Activated T-helper 1 cell treated with anti-CD3 and anti-CD28 coated beads, Interleukin-12 subunit alpha, Interleukin-12 subunit beta, Interleukin-2, Interleukin-4 antibody, amounts not matched to agents 30 ng/mL and 10 ng/mL and 1 ng/mL, durations not matched to agents 14 hours and 24 hours and 36 hours (primary cell): ENCODE measurements at regions of chr22 and their contacts with region 1.

Region 1: GRCh38 chr22:28907311-28908008 is 24.1 kb downstream of the ZNRF3 start:
- DNase-seq: peak; percentile 3
- H3K4me3 Mint-ChIP-seq: peak overlapping the region; percentile 4
- H3K27ac Mint-ChIP-seq: peak overlapping the region; percentile 55
- H3K4me1 Mint-ChIP-seq: peaks cover 24% of the 10 kb centered on the region
- H3K27me3 Mint-ChIP-seq: peaks cover 71% of the 10 kb centered on the region

Region 2: GRCh38 chr22:28741758-28742561 is 165.5 kb before region 1 on chr22 and contains the starts of genes CHEK2 and HSCB:
- intact Hi-C with region 1: loop called (anchors 1 kb)
- DNase-seq: peak; percentile 97
- H3K4me3 Mint-ChIP-seq: peak within 1 kb of the TSS; percentile 86
- H3K27ac Mint-ChIP-seq: peak within 1 kb of the TSS; percentile 70
- H3K4me1 Mint-ChIP-seq: peaks cover 42% of the 10 kb centered on the region
- H3K27me3 Mint-ChIP-seq: no peaks in the 10 kb centered on the region
- total RNA-seq, gene CHEK2: 31.4 and 35.0 TPM in 2 replicates
- total RNA-seq, gene HSCB: 16.6 and 18.0 TPM in 2 replicates

Region 3: GRCh38 chr22:28810821-28811491 is 96.5 kb before region 1 on chr22:
- intact Hi-C with region 1: loop called (anchors 5 kb)
- DNase-seq: peak; percentile 60
- H3K4me3 Mint-ChIP-seq: peak overlapping the region; percentile 76
- H3K27ac Mint-ChIP-seq: peak overlapping the region; percentile 89
- H3K4me1 Mint-ChIP-seq: peaks cover 81% of the 10 kb centered on the region
- H3K27me3 Mint-ChIP-seq: no peaks in the 10 kb centered on the region

Region 4: DNA sequence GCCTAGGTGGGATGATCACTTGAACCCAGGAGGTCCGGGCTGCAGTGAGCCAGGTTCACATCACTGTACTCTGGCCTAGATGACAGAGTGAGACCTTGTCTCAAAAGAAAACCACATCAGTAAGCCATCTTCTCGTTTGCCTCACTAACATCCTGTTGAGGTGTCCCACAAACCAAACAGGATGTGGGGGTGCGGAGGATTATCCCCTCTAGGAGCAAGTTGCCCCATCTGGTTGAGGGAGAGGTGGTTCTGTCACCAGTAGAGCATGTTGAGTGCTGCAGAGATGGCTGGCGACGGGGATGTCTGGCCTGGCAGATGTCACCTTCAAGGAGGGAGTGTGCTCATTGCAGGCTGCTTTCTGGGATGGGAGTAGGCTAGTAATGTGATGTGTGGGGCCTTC is 48.4 kb after region 1 on chr22:
- intact Hi-C with region 1: loop called (anchors 1 kb)
- DNase-seq: peak; percentile 76
- H3K4me3 Mint-ChIP-seq: peak overlapping the region; percentile 61
- H3K27ac Mint-ChIP-seq: peak overlapping the region; percentile 67
- H3K4me1 Mint-ChIP-seq: peaks cover 17% of the 10 kb centered on the region
- H3K27me3 Mint-ChIP-seq: peaks cover 89% of the 10 kb centered on the region

Region 5: GRCh38 chr22:29156524-29156923 is 249.1 kb after region 1 on chr22:
- intact Hi-C with region 1: no loop called
- DNase-seq: no peak
- H3K4me3 Mint-ChIP-seq: no peak overlapping the region
- H3K27ac Mint-ChIP-seq: no peak overlapping the region
- H3K4me1 Mint-ChIP-seq: peaks cover 8% of the 10 kb centered on the region
- H3K27me3 Mint-ChIP-seq: peaks cover 31% of the 10 kb centered on the region

Region 6: GRCh38 chr22:29267858-29268417 is 360.5 kb after region 1 on chr22 and contains the starts of genes EWSR1 and RHBDD3:
- intact Hi-C with region 1: loop called (anchors 2 kb)
- DNase-seq: peak; percentile 97
- H3K4me3 Mint-ChIP-seq: peak within 1 kb of the TSS; percentile 96
- H3K27ac Mint-ChIP-seq: peak within 1 kb of the TSS; percentile 99
- H3K4me1 Mint-ChIP-seq: peaks cover 49% of the 10 kb centered on the region
- H3K27me3 Mint-ChIP-seq: no peaks in the 10 kb centered on the region
- total RNA-seq, gene EWSR1: 454 and 463 TPM in 2 replicates
- total RNA-seq, gene RHBDD3: 53.3 and 59.4 TPM in 2 replicates